B cell (primary cell): ENCODE measurements at regions of chr6 and their contacts with region 1.

Region 1: GRCh38 chr6:43174263-43175112 is 3.4 kb downstream of the SRF start:
- DNase-seq: peak; percentile 96
- ATAC-seq: peak; percentile 66
- H3K4me3 ChIP-seq: peak overlapping the region in 4 of 5 experiments; percentile 35 to 47 (median 38)
- H3K4me3 Mint-ChIP-seq: peak overlapping the region; percentile 85
- H3K27ac ChIP-seq: peak overlapping the region; percentile 78 to 90
- H3K27ac Mint-ChIP-seq: peak overlapping the region; percentile 95
- H3K4me1 ChIP-seq: peaks cover 35 to 49% of the 10 kb centered on the region in 2 donors
- H3K4me1 Mint-ChIP-seq: peaks cover 46% of the 10 kb centered on the region
- H3K27me3 ChIP-seq: peaks cover 0 to 2% (median 0%) of the 10 kb centered on the region in 4 experiments
- H3K27me3 Mint-ChIP-seq: no peaks in the 10 kb centered on the region
- CTCF ChIP-seq: no peak

Region 2: GRCh38 chr6:42745707-42746462 is 428.6 kb before region 1 on chr6 and contains the start of gene TBCC:
- CTCF ChIA-PET with region 1: interaction called, 3 read pairs
- POLR2A ChIA-PET with region 1: no interaction called
- intact Hi-C with region 1: loop called (anchors 1 kb)
- DNase-seq: peak; percentile 96
- ATAC-seq: peak; percentile 74
- H3K4me3 ChIP-seq: peak within 1 kb of the TSS; percentile 81 to 100 (median 90)
- H3K4me3 Mint-ChIP-seq: peak within 1 kb of the TSS; percentile 100
- H3K27ac ChIP-seq: peak within 1 kb of the TSS; percentile 78 to 91
- H3K27ac Mint-ChIP-seq: peak within 1 kb of the TSS; percentile 100
- H3K4me1 ChIP-seq: peaks cover 21 to 28% of the 10 kb centered on the region in 2 donors
- H3K4me1 Mint-ChIP-seq: peaks cover 35% of the 10 kb centered on the region
- H3K27me3 ChIP-seq: no peaks in the 10 kb centered on the region
- H3K27me3 Mint-ChIP-seq: no peaks in the 10 kb centered on the region
- CTCF ChIP-seq: no peak
- total RNA-seq, gene TBCC: 54.6 and 55.7 TPM in 2 replicates

Region 3: GRCh38 chr6:42984001-42984923 is 190.2 kb before region 1 on chr6 and contains the start of gene PPP2R5D:
- CTCF ChIA-PET with region 1: no interaction called
- POLR2A ChIA-PET with region 1: interaction called, 3 read pairs
- intact Hi-C with region 1: loop called (anchors 1 kb)
- DNase-seq: peak; percentile 98
- ATAC-seq: peak; percentile 95
- H3K4me3 ChIP-seq: peak within 1 kb of the TSS; percentile 54 to 96 (median 91)
- H3K4me3 Mint-ChIP-seq: peak within 1 kb of the TSS; percentile 89
- H3K27ac ChIP-seq: peak within 1 kb of the TSS; percentile 74 to 86
- H3K27ac Mint-ChIP-seq: peak within 1 kb of the TSS; percentile 95
- H3K4me1 ChIP-seq: peaks cover 18 to 30% of the 10 kb centered on the region in 2 donors
- H3K4me1 Mint-ChIP-seq: peaks cover 49% of the 10 kb centered on the region
- H3K27me3 ChIP-seq: no peaks in the 10 kb centered on the region
- H3K27me3 Mint-ChIP-seq: no peaks in the 10 kb centered on the region
- CTCF ChIP-seq: no peak
- total RNA-seq, gene PPP2R5D: 23.6 and 26.3 TPM in 2 replicates

Region 4: GRCh38 chr6:43070028-43070632 is 104.4 kb before region 1 on chr6:
- CTCF ChIA-PET with region 1: no interaction called
- POLR2A ChIA-PET with region 1: no interaction called
- intact Hi-C with region 1: no loop called
- DNase-seq: peak; percentile 52
- ATAC-seq: peak; percentile 36
- H3K4me3 ChIP-seq: no peak overlapping the region
- H3K4me3 Mint-ChIP-seq: no peak overlapping the region
- H3K27ac ChIP-seq: no peak overlapping the region
- H3K27ac Mint-ChIP-seq: no peak overlapping the region
- H3K4me1 ChIP-seq: no peaks in the 10 kb centered on the region
- H3K4me1 Mint-ChIP-seq: peaks cover 2% of the 10 kb centered on the region
- H3K27me3 ChIP-seq: no peaks in the 10 kb centered on the region
- H3K27me3 Mint-ChIP-seq: peaks cover 3% of the 10 kb centered on the region
- CTCF ChIP-seq: peak; percentile 58

Region 5: DNA sequence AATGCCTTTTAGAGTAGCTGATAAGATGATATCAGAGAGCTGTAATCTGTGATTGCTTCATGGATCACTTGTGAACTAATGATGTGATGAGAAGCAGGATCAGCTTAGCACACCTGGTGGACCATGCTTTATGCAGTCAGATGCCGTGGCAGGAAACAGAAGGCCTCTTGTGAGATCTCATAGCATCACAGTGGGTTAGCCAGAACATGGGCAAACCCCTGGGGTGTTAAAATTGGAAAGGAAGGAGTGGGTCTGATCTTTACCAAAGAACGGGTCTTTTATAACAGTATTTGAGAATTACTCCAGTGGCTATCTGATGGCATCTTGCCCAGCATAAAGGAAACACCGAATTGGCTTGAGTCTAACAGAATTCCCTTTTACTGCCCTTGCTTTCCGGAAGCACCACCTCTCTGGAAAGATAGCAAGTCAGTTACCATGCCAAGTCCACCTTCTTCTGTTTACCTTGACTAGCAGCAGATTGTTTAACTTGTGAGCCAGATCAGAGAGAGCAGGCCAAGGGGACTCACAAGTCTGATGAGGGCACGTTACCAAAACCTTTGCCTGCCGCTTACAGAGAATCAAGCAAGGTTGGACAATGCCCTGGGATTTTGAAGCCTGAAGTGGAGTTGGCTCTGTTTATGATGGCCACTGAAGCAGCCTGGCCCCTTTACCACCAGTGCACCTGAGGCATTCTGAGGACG is 24.3 kb before region 1 on chr6:
- CTCF ChIA-PET with region 1: no interaction called
- POLR2A ChIA-PET with region 1: no interaction called
- intact Hi-C with region 1: no loop called
- DNase-seq: no peak
- ATAC-seq: no peak
- H3K4me3 ChIP-seq: no peak overlapping the region
- H3K4me3 Mint-ChIP-seq: no peak overlapping the region
- H3K27ac ChIP-seq: no peak overlapping the region
- H3K27ac Mint-ChIP-seq: no peak overlapping the region
- H3K4me1 ChIP-seq: no peaks in the 10 kb centered on the region
- H3K4me1 Mint-ChIP-seq: no peaks in the 10 kb centered on the region
- H3K27me3 ChIP-seq: peaks cover 0 to 4% (median 0%) of the 10 kb centered on the region in 4 experiments
- H3K27me3 Mint-ChIP-seq: peaks cover 10% of the 10 kb centered on the region
- CTCF ChIP-seq: no peak

Region 6: GRCh38 chr6:43228951-43229802 is 54.7 kb after region 1 on chr6 and contains the start of gene DNPH1:
- CTCF ChIA-PET with region 1: interaction called, 7 read pairs
- POLR2A ChIA-PET with region 1: interaction called, 3 read pairs
- intact Hi-C with region 1: loop called (anchors 1 kb)
- DNase-seq: peak; percentile 89
- ATAC-seq: peak; percentile 67
- H3K4me3 ChIP-seq: peak within 1 kb of the TSS; percentile 43 to 70 (median 61)
- H3K4me3 Mint-ChIP-seq: peak within 1 kb of the TSS; percentile 92
- H3K27ac ChIP-seq: peak within 1 kb of the TSS in 1 of 2 donors; percentile 73
- H3K27ac Mint-ChIP-seq: peak within 1 kb of the TSS; percentile 90
- H3K4me1 ChIP-seq: peaks cover 34 to 45% of the 10 kb centered on the region in 2 donors
- H3K4me1 Mint-ChIP-seq: peaks cover 29% of the 10 kb centered on the region
- H3K27me3 ChIP-seq: peaks cover 0 to 5% (median 0%) of the 10 kb centered on the region in 4 experiments
- H3K27me3 Mint-ChIP-seq: peaks cover 9% of the 10 kb centered on the region
- CTCF ChIP-seq: peak; percentile 95
- total RNA-seq, gene DNPH1: 25.8 and 29.0 TPM in 2 replicates

Region 7: GRCh38 chr6:43427406-43428111 is 253.1 kb after region 1 on chr6 and contains the start of gene ABCC10:
- CTCF ChIA-PET with region 1: no interaction called
- POLR2A ChIA-PET with region 1: no interaction called
- intact Hi-C with region 1: loop called (anchors 5 kb)
- DNase-seq: peak; percentile 97
- ATAC-seq: peak; percentile 93
- H3K4me3 ChIP-seq: peak within 1 kb of the TSS; percentile 59 to 93 (median 83)
- H3K4me3 Mint-ChIP-seq: peak within 1 kb of the TSS; percentile 96
- H3K27ac ChIP-seq: peak within 1 kb of the TSS; percentile 72 to 88
- H3K27ac Mint-ChIP-seq: peak within 1 kb of the TSS; percentile 96
- H3K4me1 ChIP-seq: peaks cover 16 to 19% of the 10 kb centered on the region in 2 donors
- H3K4me1 Mint-ChIP-seq: peaks cover 24% of the 10 kb centered on the region
- H3K27me3 ChIP-seq: no peaks in the 10 kb centered on the region
- H3K27me3 Mint-ChIP-seq: no peaks in the 10 kb centered on the region
- CTCF ChIP-seq: peak; percentile 21
- total RNA-seq, gene ABCC10: 71.5 and 84.2 TPM in 2 replicates

Region 8: GRCh38 chr6:43575772-43576551 is 401.5 kb after region 1 on chr6 and contains the starts of genes POLH and XPO5:
- CTCF ChIA-PET with region 1: no interaction called
- POLR2A ChIA-PET with region 1: no interaction called
- intact Hi-C with region 1: loop called (anchors 2 kb)
- DNase-seq: peak; percentile 95
- ATAC-seq: peak; percentile 94
- H3K4me3 ChIP-seq: peak within 1 kb of the TSS; percentile 81 to 99 (median 98)
- H3K4me3 Mint-ChIP-seq: peak within 1 kb of the TSS; percentile 94
- H3K27ac ChIP-seq: peak within 1 kb of the TSS; percentile 49 to 80
- H3K27ac Mint-ChIP-seq: peak within 1 kb of the TSS; percentile 91
- H3K4me1 ChIP-seq: peaks cover 28 to 40% of the 10 kb centered on the region in 2 donors
- H3K4me1 Mint-ChIP-seq: peaks cover 36% of the 10 kb centered on the region
- H3K27me3 ChIP-seq: no peaks in the 10 kb centered on the region
- H3K27me3 Mint-ChIP-seq: no peaks in the 10 kb centered on the region
- CTCF ChIP-seq: no peak
- total RNA-seq, gene POLH: 24.8 and 26.4 TPM in 2 replicates
- total RNA-seq, gene XPO5: 45.7 and 48.1 TPM in 2 replicates